Right ventricle myocardium inferior (tissue), 1 donor: ENCODE measurements at regions of chr3 and their contacts with region 1.

Region 1: DNA sequence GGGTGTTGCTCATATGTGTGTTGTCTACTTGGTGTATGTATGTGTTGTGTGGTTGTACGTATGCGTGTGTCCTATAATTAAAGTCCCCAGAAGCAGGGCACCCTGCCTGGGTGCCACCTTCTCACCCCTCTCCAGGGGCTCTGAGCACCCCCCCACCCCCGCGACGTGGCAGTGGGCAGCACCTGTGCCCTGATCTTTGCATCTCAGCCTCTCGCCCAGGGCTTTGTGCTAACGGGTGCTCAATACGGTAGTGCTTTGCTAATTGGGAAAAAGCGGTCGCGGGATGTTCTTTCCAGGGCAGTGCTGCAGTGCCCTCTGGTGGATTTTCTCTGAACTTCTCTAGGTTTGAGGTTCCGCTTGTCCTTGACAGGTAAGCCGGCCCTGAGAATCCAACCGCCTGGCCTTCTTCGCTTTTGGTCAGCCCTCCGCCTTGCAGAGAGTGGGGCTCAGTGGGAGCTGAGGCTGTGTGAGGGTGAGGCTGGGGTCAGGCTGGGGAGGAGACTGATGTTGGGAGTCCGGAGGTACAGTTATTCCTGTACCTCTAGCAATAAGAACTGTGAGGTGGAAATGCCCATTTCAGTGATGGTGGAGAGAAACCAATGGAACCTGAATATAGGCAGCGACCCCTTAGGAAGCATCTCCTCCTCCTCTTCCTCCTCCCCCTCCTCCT is 17.6 kb upstream of the EPHB3 start:
- DNase-seq: no peak
- ATAC-seq: peak; percentile 59

Region 2: GRCh38 chr3:184371570-184372018 is 172.4 kb before region 1 on chr3:
- intact Hi-C with region 1: loop called (anchors 1 kb)
- DNase-seq: peak; percentile 83
- ATAC-seq: peak; percentile 87

Region 3: DNA sequence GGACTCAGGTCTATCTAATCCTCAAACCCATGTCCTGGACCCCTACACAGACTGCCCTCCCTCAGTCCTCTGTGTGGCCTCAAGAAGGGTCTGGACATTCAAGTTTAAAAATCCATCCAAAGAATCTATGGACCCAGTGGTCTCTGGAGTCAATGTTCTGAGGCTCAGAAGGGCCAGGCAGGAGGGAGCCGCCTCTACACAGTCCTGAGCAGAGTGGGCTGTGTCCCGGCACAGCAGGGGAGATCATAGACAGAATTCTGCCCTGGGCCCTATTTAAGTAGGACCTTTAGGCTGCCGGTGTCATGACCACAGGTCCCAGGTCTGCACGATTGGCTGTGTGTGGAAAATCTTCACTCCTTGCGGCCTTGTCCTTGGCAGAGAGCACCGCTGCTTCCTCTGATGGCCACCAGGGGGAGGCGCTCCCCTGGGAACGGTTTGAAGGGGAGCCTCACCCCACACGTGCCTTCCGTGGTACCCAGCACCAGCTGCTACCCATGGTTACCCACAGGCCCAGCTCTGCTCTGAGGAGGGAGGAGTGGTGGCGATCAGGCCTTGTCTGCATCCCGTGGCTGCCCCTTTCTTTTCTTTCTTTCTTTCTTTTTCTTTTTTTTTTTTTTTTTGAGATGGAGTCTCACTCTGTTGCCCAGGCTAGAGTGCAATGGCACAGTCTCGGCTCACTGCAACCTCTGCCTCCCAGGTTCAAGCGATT is 126.2 kb before region 1 on chr3:
- intact Hi-C with region 1: loop called (anchors 5 kb)
- DNase-seq: peak; percentile 84
- ATAC-seq: peak; percentile 82